CD8-positive, alpha-beta T cell (primary cell): ENCODE measurements at regions of chr9 and their contacts with region 1.

Region 1: DNA sequence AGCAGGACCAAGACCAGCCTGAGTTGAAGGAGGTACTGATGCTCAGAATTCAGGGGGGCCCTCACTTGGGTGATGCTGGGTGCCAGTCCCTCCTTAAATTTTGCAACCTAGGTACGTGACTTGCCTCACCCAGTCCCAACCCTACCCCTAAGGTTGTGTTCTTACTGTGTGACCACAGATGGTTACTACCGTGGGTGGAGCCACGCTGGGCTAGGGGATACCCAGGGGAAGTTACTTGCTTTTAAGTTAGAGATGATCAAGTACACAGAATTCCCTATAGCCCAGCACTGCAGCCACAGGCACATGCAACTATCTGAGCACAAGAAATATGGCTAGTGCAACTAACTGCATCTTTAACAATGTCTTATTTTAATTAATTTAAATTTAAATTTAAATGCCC is 32.9 kb downstream of the NXNL2 start:
- DNase-seq: no peak
- ATAC-seq: no peak
- H3K4me3 ChIP-seq: no peak overlapping the region
- H3K4me3 Mint-ChIP-seq: no peak overlapping the region
- H3K27ac ChIP-seq: no peak overlapping the region
- H3K27ac Mint-ChIP-seq: no peak overlapping the region
- H3K4me1 ChIP-seq: no peaks in the 10 kb centered on the region
- H3K4me1 Mint-ChIP-seq: no peaks in the 10 kb centered on the region
- H3K27me3 ChIP-seq: no peaks in the 10 kb centered on the region
- H3K27me3 Mint-ChIP-seq: peaks cover 5% of the 10 kb centered on the region
- CTCF ChIP-seq: no peak

Region 2: GRCh38 chr9:88502552-88503034 is 65.3 kb before region 1 on chr9:
- CTCF ChIA-PET with region 1: no interaction called
- POLR2A ChIA-PET with region 1: no interaction called
- intact Hi-C with region 1: loop called in 1 of 2 experiments (anchors 2 kb)
- DNase-seq: no peak
- ATAC-seq: no peak
- H3K4me3 ChIP-seq: no peak overlapping the region
- H3K4me3 Mint-ChIP-seq: no peak overlapping the region
- H3K27ac ChIP-seq: no peak overlapping the region
- H3K27ac Mint-ChIP-seq: no peak overlapping the region
- H3K4me1 ChIP-seq: no peaks in the 10 kb centered on the region
- H3K4me1 Mint-ChIP-seq: no peaks in the 10 kb centered on the region
- H3K27me3 ChIP-seq: no peaks in the 10 kb centered on the region
- H3K27me3 Mint-ChIP-seq: peaks cover 6% of the 10 kb centered on the region
- CTCF ChIP-seq: no peak